ENCODE measurements at regions of chr14 and their contacts with region 1.

Region 1: GRCh38 chr14:100383727-100384158 is 60.6 kb downstream of the SLC25A47 start:
- DNase-seq: peak; percentile 63 to 84
- ATAC-seq: peak; percentile 88 to 94 (median 94)
- H3K4me3 ChIP-seq: no peak overlapping the region
- H3K4me3 Mint-ChIP-seq: no peak overlapping the region
- H3K27ac ChIP-seq: no peak overlapping the region
- H3K27ac Mint-ChIP-seq: peak overlapping the region in 1 of 2 donors; percentile 56
- H3K4me1 ChIP-seq: no peaks in the 10 kb centered on the region
- H3K4me1 Mint-ChIP-seq: peaks cover 10 to 20% of the 10 kb centered on the region in 2 donors
- H3K27me3 ChIP-seq: no peaks in the 10 kb centered on the region
- H3K27me3 Mint-ChIP-seq: peaks cover 0 to 3% of the 10 kb centered on the region in 2 donors
- CTCF ChIP-seq: peak; percentile 83

Region 2: DNA sequence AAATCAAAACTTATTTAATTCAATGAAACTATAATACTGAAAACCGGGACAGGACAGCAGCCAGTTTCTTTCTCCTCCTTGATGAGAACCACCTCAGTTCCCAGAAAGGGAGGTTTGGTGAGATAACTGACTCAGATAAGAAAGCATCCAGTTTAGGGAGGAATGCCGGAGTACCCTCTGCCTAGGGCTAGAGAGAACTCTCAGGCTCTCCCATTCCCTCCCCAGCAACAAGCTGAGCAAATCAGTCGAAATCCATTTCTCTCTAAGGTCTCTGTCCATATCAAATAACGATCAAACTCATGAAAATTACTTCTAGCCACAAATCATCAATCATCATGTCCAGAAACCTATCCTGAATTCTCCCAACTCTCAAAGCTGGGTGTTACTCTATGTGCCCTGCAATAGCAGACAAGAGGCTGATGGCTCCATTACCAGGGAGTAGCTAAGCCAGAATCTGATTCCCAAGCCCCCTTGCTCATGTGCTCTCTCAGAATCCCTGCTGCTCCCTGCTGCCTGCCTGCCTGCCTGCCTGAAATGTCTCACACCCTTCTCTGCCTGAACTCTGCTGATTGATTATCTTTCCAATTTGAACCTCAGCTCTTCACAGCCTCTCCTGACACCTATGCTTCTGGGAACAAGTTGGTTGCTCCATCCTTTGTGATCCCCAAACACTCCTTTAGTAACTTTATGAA is 11.2 kb before region 1 on chr14:
- intact Hi-C with region 1: no loop called
- DNase-seq: no peak
- ATAC-seq: no peak
- H3K4me3 ChIP-seq: no peak overlapping the region
- H3K4me3 Mint-ChIP-seq: no peak overlapping the region
- H3K27ac ChIP-seq: no peak overlapping the region
- H3K27ac Mint-ChIP-seq: no peak overlapping the region
- H3K4me1 ChIP-seq: peaks cover 26% of the 10 kb centered on the region
- H3K4me1 Mint-ChIP-seq: peaks cover 20 to 24% of the 10 kb centered on the region in 2 donors
- H3K27me3 ChIP-seq: no peaks in the 10 kb centered on the region
- H3K27me3 Mint-ChIP-seq: no peaks in the 10 kb centered on the region
- CTCF ChIP-seq: no peak

Region 3: GRCh38 chr14:100446572-100446971 is 62.8 kb after region 1 on chr14:
- intact Hi-C with region 1: no loop called
- DNase-seq: no peak
- ATAC-seq: no peak
- H3K4me3 ChIP-seq: no peak overlapping the region
- H3K4me3 Mint-ChIP-seq: no peak overlapping the region
- H3K27ac ChIP-seq: no peak overlapping the region
- H3K27ac Mint-ChIP-seq: no peak overlapping the region
- H3K4me1 ChIP-seq: peaks cover 6% of the 10 kb centered on the region
- H3K4me1 Mint-ChIP-seq: peaks cover 9 to 30% of the 10 kb centered on the region in 2 donors
- H3K27me3 ChIP-seq: no peaks in the 10 kb centered on the region
- H3K27me3 Mint-ChIP-seq: no peaks in the 10 kb centered on the region
- CTCF ChIP-seq: no peak

Region 4: DNA sequence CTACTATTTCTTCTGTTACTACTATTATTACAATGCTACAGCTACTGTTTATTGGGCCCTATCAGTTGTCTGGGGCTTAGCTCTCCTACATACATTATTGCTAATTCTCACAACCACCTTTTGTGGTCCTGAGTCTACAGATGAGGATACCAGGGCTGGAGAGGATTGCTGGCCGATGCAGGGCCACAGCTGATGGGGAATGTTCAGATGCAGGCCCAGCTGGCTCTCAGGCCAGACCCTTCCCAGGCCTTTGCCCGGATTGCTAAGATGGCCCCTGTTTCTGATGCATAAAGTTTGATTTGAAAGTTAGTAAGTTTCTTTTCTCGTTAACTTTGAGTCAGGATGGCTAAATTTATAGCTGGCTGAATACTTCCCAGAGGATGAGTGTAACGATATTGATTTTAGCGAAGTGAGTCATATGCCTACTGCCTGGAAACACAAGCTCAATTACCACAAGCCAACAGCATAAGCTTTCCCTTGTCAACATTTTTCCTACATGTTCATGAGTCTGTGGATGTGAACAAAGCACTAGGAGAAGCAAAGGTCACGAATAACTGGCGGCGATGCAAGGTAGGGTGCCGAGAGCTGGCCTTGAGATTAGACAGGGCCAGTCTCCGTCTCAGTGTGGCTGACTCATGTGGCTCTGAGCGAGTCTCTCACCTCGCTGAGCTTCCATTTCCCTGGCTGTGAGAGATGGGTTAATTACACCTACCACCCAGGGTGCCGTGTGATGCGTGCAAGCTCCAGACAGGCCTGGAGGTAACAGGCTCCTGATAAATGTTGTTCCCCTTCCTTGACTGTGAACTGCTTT is 92.5 kb after region 1 on chr14:
- intact Hi-C with region 1: loop called (anchors 10 kb)
- DNase-seq: no peak
- ATAC-seq: no peak
- H3K4me3 ChIP-seq: no peak overlapping the region
- H3K4me3 Mint-ChIP-seq: no peak overlapping the region
- H3K27ac ChIP-seq: no peak overlapping the region
- H3K27ac Mint-ChIP-seq: no peak overlapping the region
- H3K4me1 ChIP-seq: no peaks in the 10 kb centered on the region
- H3K4me1 Mint-ChIP-seq: peaks cover 0 to 7% of the 10 kb centered on the region in 2 donors
- H3K27me3 ChIP-seq: no peaks in the 10 kb centered on the region
- H3K27me3 Mint-ChIP-seq: no peaks in the 10 kb centered on the region
- CTCF ChIP-seq: no peak

Region 5: GRCh38 chr14:100645192-100645990 is 261.6 kb after region 1 on chr14:
- intact Hi-C with region 1: loop called (anchors 2 kb)
- DNase-seq: peak; percentile 76 to 93
- ATAC-seq: peak; percentile 81 to 89 (median 85)
- H3K4me3 ChIP-seq: no peak overlapping the region
- H3K4me3 Mint-ChIP-seq: peak overlapping the region; percentile 43
- H3K27ac ChIP-seq: no peak overlapping the region
- H3K27ac Mint-ChIP-seq: peak overlapping the region in 1 of 2 donors; percentile 28
- H3K4me1 ChIP-seq: peaks cover 54% of the 10 kb centered on the region
- H3K4me1 Mint-ChIP-seq: peaks cover 51 to 57% of the 10 kb centered on the region in 2 donors
- H3K27me3 ChIP-seq: peaks cover 17% of the 10 kb centered on the region
- H3K27me3 Mint-ChIP-seq: peaks cover 63 to 78% of the 10 kb centered on the region in 2 donors
- CTCF ChIP-seq: peak; percentile 81

Region 6: GRCh38 chr14:100654814-100655740 is 271.3 kb after region 1 on chr14:
- intact Hi-C with region 1: loop called (anchors 2 kb)
- DNase-seq: peak; percentile 31 to 75
- ATAC-seq: peak; percentile 55 to 83 (median 79)
- H3K4me3 ChIP-seq: no peak overlapping the region
- H3K4me3 Mint-ChIP-seq: no peak overlapping the region
- H3K27ac ChIP-seq: no peak overlapping the region
- H3K27ac Mint-ChIP-seq: no peak overlapping the region
- H3K4me1 ChIP-seq: no peaks in the 10 kb centered on the region
- H3K4me1 Mint-ChIP-seq: peaks cover 0 to 9% of the 10 kb centered on the region in 2 donors
- H3K27me3 ChIP-seq: peaks cover 8% of the 10 kb centered on the region
- H3K27me3 Mint-ChIP-seq: peaks cover 35 to 47% of the 10 kb centered on the region in 2 donors
- CTCF ChIP-seq: peak; percentile 66

Region 7: DNA sequence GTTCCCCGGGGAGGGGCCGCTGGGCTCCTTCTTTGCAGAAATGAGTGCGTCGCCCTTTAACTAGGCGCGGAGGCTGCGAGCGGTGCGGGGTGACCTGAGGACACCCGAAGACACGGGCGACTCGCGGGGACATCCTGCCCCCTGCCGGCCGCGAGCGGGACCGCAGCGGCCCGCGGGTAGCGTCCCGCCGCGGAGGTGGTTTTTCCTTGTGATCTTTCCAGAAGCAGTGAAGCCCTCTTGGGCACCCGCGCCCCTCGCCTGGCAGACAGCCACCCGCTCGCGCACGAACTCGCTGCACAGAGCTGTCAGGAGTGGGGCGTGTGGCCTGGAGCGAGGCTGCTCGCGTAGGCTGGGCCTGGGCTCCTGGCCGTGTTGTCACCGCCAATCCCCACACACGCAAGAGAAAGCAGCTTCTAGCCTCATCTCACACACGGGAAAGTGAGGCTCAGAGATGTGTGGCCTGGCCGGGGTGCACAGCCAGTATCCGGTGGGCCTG is 1244.8 kb after region 1 on chr14:
- intact Hi-C with region 1: loop called (anchors 2 kb)
- DNase-seq: peak; percentile 73 to 85
- ATAC-seq: peak; percentile 89 to 100 (median 99)
- H3K4me3 ChIP-seq: no peak overlapping the region
- H3K4me3 Mint-ChIP-seq: no peak overlapping the region
- H3K27ac ChIP-seq: no peak overlapping the region
- H3K27ac Mint-ChIP-seq: no peak overlapping the region
- H3K4me1 ChIP-seq: peaks cover 12% of the 10 kb centered on the region
- H3K4me1 Mint-ChIP-seq: peaks cover 9 to 12% of the 10 kb centered on the region in 2 donors
- H3K27me3 ChIP-seq: peaks cover 8% of the 10 kb centered on the region
- H3K27me3 Mint-ChIP-seq: peaks cover 0 to 21% of the 10 kb centered on the region in 2 donors
- CTCF ChIP-seq: peak; percentile 96